Naive thymus-derived CD4-positive, alpha-beta T cell (primary cell): ENCODE measurements at regions of chr13 and their contacts with region 1.

Region 1: GRCh38 chr13:99656092-99656745 is 154.9 kb downstream of the TM9SF2 start:
- DNase-seq: peak; percentile 58 to 84 (median 80)
- ATAC-seq: peak; percentile 89
- H3K4me3 ChIP-seq: peak overlapping the region; percentile 47
- H3K4me3 Mint-ChIP-seq: peak overlapping the region; percentile 73 to 90 (median 81)
- H3K27ac ChIP-seq: peak overlapping the region; percentile 82
- H3K27ac Mint-ChIP-seq: peak overlapping the region; percentile 47 to 98 (median 92)
- H3K4me1 ChIP-seq: peaks cover 39 to 41% of the 10 kb centered on the region in 2 donors
- H3K4me1 Mint-ChIP-seq: peaks cover 14 to 54% (median 45%) of the 10 kb centered on the region in 7 donors
- H3K27me3 ChIP-seq: no peaks in the 10 kb centered on the region
- H3K27me3 Mint-ChIP-seq: peaks cover 0 to 27% (median 0%) of the 10 kb centered on the region in 5 donors

Region 2: DNA sequence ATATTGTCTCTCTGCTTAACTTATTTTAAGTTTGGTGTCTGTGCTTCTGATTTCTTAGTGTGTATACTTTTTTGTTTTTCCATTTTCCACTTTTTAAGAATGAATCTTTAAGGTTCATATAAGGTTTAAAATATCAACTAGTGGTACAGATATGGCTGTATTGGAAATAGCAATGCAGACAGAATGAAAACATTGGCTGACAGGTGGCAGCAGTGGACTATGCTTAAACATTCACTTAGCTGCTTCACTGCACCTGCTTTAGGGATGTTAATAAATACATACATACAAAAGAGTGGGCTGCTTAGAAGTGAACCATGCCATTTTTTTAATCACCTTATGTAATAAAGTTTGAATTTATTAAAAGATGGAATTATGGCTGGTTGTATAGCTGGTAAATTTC is 127.7 kb before region 1 on chr13:
- CTCF ChIA-PET with region 1: interaction called, 8 read pairs
- POLR2A ChIA-PET with region 1: no interaction called
- intact Hi-C with region 1: loop called (anchors 1 kb)
- DNase-seq: peak in 6 of 9 donors; percentile 9 to 57 (median 48)
- ATAC-seq: peak; percentile 68
- H3K4me3 ChIP-seq: no peak overlapping the region
- H3K4me3 Mint-ChIP-seq: peak overlapping the region in 2 of 10 donors; percentile 12 to 25
- H3K27ac ChIP-seq: no peak overlapping the region
- H3K27ac Mint-ChIP-seq: no peak overlapping the region
- H3K4me1 ChIP-seq: peaks cover 8 to 17% of the 10 kb centered on the region in 2 donors
- H3K4me1 Mint-ChIP-seq: peaks cover 33 to 63% (median 47%) of the 10 kb centered on the region in 7 donors
- H3K27me3 ChIP-seq: no peaks in the 10 kb centered on the region
- H3K27me3 Mint-ChIP-seq: no peaks in the 10 kb centered on the region

Region 3: GRCh38 chr13:99895223-99895994 is 239.2 kb after region 1 on chr13:
- CTCF ChIA-PET with region 1: no interaction called
- POLR2A ChIA-PET with region 1: interaction called, 4 read pairs
- intact Hi-C with region 1: loop called (anchors 1 to 2 kb)
- DNase-seq: peak in 2 of 9 donors; percentile 10 to 27
- ATAC-seq: peak; percentile 14
- H3K4me3 ChIP-seq: peak overlapping the region; percentile 62
- H3K4me3 Mint-ChIP-seq: peak overlapping the region; percentile 39 to 96 (median 82)
- H3K27ac ChIP-seq: no peak overlapping the region
- H3K27ac Mint-ChIP-seq: peak overlapping the region in 1 of 9 donors; percentile 72
- H3K4me1 ChIP-seq: peaks cover 7% of the 10 kb centered on the region in 2 donors
- H3K4me1 Mint-ChIP-seq: peaks cover 7 to 24% (median 16%) of the 10 kb centered on the region in 7 donors
- H3K27me3 ChIP-seq: peaks cover 6 to 28% of the 10 kb centered on the region in 2 donors
- H3K27me3 Mint-ChIP-seq: peaks cover 50 to 68% (median 54%) of the 10 kb centered on the region in 5 donors

Region 4: GRCh38 chr13:99980201-99980823 is 324.1 kb after region 1 on chr13:
- CTCF ChIA-PET with region 1: interaction called, 3 read pairs
- POLR2A ChIA-PET with region 1: interaction called, 5 read pairs
- intact Hi-C with region 1: loop called in 1 of 2 experiments (anchors 5 kb)
- DNase-seq: peak in 6 of 9 donors; percentile 44 to 64 (median 55)
- ATAC-seq: peak; percentile 78
- H3K4me3 ChIP-seq: no peak overlapping the region
- H3K4me3 Mint-ChIP-seq: peak overlapping the region in 4 of 10 donors; percentile 42 to 68 (median 59)
- H3K27ac ChIP-seq: no peak overlapping the region
- H3K27ac Mint-ChIP-seq: no peak overlapping the region
- H3K4me1 ChIP-seq: peaks cover 8 to 18% of the 10 kb centered on the region in 2 donors
- H3K4me1 Mint-ChIP-seq: peaks cover 0 to 35% (median 23%) of the 10 kb centered on the region in 7 donors
- H3K27me3 ChIP-seq: peaks cover 22 to 66% of the 10 kb centered on the region in 2 donors
- H3K27me3 Mint-ChIP-seq: peaks cover 51 to 71% (median 54%) of the 10 kb centered on the region in 5 donors

Region 5: DNA sequence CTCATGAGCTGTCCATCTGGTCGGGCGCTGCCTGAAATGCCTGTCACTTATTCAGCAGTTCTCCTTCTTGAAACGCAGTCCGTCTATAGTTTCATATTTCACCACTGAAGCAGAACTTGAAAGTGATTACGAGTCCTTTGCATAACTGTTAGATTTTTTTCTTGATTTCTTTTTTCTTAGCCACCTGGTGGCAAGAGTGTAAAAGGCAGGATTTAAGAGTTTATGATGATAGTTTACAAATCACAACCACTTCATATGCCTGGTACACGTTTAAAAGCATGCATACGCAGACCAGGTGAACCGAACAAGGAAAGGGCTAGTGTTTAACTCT is 886.6 kb after region 1 on chr13:
- CTCF ChIA-PET with region 1: interaction called, 8 read pairs
- POLR2A ChIA-PET with region 1: interaction called, 4 read pairs
- intact Hi-C with region 1: loop called (anchors 1 kb)
- DNase-seq: peak in 7 of 9 donors; percentile 19 to 58 (median 51)
- ATAC-seq: peak; percentile 76
- H3K4me3 ChIP-seq: no peak overlapping the region
- H3K4me3 Mint-ChIP-seq: peak overlapping the region in 9 of 10 donors; percentile 10 to 81 (median 55)
- H3K27ac ChIP-seq: no peak overlapping the region
- H3K27ac Mint-ChIP-seq: peak overlapping the region in 1 of 9 donors; percentile 19
- H3K4me1 ChIP-seq: peaks cover 0 to 22% of the 10 kb centered on the region in 2 donors
- H3K4me1 Mint-ChIP-seq: peaks cover 7 to 48% (median 31%) of the 10 kb centered on the region in 7 donors
- H3K27me3 ChIP-seq: no peaks in the 10 kb centered on the region
- H3K27me3 Mint-ChIP-seq: peaks cover 0 to 3% (median 0%) of the 10 kb centered on the region in 5 donors

Region 6: GRCh38 chr13:101127741-101128353 is 1471.6 kb after region 1 on chr13:
- CTCF ChIA-PET with region 1: interaction called, 7 read pairs
- POLR2A ChIA-PET with region 1: interaction called, 4 read pairs
- intact Hi-C with region 1: loop called (anchors 1 kb)
- DNase-seq: peak in 5 of 9 donors; percentile 16 to 36 (median 29)
- ATAC-seq: peak; percentile 80
- H3K4me3 ChIP-seq: no peak overlapping the region
- H3K4me3 Mint-ChIP-seq: no peak overlapping the region
- H3K27ac ChIP-seq: no peak overlapping the region
- H3K27ac Mint-ChIP-seq: no peak overlapping the region
- H3K4me1 ChIP-seq: no peaks in the 10 kb centered on the region
- H3K4me1 Mint-ChIP-seq: peaks cover 0 to 5% (median 0%) of the 10 kb centered on the region in 7 donors
- H3K27me3 ChIP-seq: peaks cover 0 to 2% of the 10 kb centered on the region in 2 donors
- H3K27me3 Mint-ChIP-seq: peaks cover 0 to 20% (median 15%) of the 10 kb centered on the region in 5 donors

Region 7: DNA sequence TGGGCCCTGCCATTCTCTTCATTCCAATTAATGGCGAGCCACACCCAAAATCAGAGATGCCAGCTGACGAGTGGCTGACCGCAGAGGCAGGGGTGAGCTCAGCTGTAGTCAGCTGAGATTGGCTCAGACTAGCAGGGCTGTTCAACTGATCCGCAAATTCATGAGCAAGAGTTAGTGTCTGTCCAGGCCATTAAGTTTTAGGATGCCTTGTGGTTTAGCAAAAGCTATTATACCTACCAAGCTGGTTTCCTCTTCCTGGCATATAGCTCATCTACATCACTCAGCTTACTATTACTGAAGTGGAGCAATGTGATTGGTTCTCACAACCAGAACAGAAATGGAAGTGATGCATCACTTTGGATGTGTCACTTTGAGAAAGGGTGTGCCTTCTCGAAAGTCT is 1611.4 kb after region 1 on chr13:
- CTCF ChIA-PET with region 1: no interaction called
- POLR2A ChIA-PET with region 1: no interaction called
- intact Hi-C with region 1: no loop called
- DNase-seq: no peak
- ATAC-seq: no peak
- H3K4me3 ChIP-seq: no peak overlapping the region
- H3K4me3 Mint-ChIP-seq: no peak overlapping the region
- H3K27ac ChIP-seq: no peak overlapping the region
- H3K27ac Mint-ChIP-seq: no peak overlapping the region
- H3K4me1 ChIP-seq: no peaks in the 10 kb centered on the region
- H3K4me1 Mint-ChIP-seq: peaks cover 0 to 6% (median 0%) of the 10 kb centered on the region in 7 donors
- H3K27me3 ChIP-seq: no peaks in the 10 kb centered on the region
- H3K27me3 Mint-ChIP-seq: peaks cover 0 to 2% (median 0%) of the 10 kb centered on the region in 5 donors